K562 (cell line): ENCODE measurements at regions of chr5 and their contacts with region 1.

Region 1: GRCh38 chr5:180201051-180201987 is 7.7 kb downstream of the RASGEF1C start:
- DNase-seq: peak; percentile 63 to 70 (median 66)
- ATAC-seq: peak; percentile 87
- H3K4me3 ChIP-seq: no peak overlapping the region
- H3K27ac ChIP-seq: no peak overlapping the region
- H3K4me1 ChIP-seq: no peaks in the 10 kb centered on the region; a peak in 1 of 5 replicates
- H3K27me3 ChIP-seq: peaks cover 11 to 35% of the 10 kb centered on the region in 2 experiments; a peak in 4 of 5 replicates
- CTCF ChIP-seq: peak; percentile 77 to 85 (median 78)
- EP300 ChIP-seq: no peak
- POLR2A ChIP-seq: no peak
- RAD21 ChIP-seq: peak; percentile 32 to 81

Region 2: DNA sequence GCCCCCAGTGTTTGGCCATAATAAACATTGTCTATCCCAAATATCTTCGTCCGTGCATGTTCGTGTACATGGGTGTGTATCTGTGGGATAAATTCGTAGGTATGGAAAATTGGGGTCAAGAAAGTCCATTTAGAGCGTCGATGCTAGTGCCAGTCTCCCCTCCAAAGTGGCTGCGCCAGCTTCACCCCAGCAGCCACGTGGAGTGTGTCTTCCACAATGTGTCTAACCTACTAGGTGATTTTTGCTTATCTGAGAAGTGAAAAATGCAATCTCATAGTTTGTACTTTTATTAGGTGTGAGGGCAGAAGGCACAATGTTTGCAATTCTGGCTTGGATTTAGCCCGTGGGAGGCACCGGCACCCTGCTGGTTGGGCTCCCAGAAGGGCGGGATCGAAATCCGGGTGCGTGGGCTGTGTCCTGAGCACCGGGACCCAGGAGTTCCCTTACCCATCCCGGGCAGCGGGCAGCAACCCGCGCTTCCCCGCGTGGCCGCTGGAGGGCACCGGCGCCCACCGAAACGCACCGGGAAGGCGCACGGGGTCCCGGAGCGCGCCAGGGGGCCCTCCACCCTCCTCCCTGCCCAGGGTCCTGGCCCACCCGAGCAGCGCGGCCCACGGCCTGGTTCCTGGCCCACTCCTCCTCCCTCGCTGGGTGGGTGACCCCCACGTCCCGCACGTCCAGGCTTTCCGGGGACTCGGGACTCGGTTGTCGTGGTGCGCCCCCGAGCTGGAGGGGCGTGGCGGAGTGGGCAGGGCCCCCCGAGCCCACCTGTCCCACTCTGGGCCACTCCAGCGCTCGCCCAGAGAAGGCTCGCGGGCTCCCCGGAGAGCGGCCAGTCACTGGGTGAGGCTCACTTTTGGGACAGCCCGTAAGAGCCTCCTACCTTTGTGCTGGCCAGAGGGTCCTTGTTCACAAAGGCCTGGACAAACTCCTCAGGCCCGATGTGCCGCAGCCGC is 74.3 kb before region 1 on chr5:
- CTCF ChIA-PET with region 1: no interaction called
- POLR2A ChIA-PET with region 1: no interaction called
- in situ Hi-C with region 1: no loop called
- intact Hi-C with region 1: loop called (anchors 5 kb)
- DNase-seq: peak; percentile 45 to 82 (median 74)
- ATAC-seq: peak; percentile 84
- H3K4me3 ChIP-seq: peak overlapping the region; percentile 10; the same call in 1 of the 2 replicates
- H3K27ac ChIP-seq: no peak overlapping the region
- H3K4me1 ChIP-seq: peaks cover 0 to 24% of the 10 kb centered on the region in 2 experiments; a peak in 3 of 5 replicates
- H3K27me3 ChIP-seq: peaks cover 30 to 75% of the 10 kb centered on the region in 2 experiments; a peak in 4 of 5 replicates
- CTCF ChIP-seq: peak; percentile 71 to 85 (median 75)
- EP300 ChIP-seq: no peak
- POLR2A ChIP-seq: no peak
- RAD21 ChIP-seq: peak; percentile 58 to 65

Region 3: DNA sequence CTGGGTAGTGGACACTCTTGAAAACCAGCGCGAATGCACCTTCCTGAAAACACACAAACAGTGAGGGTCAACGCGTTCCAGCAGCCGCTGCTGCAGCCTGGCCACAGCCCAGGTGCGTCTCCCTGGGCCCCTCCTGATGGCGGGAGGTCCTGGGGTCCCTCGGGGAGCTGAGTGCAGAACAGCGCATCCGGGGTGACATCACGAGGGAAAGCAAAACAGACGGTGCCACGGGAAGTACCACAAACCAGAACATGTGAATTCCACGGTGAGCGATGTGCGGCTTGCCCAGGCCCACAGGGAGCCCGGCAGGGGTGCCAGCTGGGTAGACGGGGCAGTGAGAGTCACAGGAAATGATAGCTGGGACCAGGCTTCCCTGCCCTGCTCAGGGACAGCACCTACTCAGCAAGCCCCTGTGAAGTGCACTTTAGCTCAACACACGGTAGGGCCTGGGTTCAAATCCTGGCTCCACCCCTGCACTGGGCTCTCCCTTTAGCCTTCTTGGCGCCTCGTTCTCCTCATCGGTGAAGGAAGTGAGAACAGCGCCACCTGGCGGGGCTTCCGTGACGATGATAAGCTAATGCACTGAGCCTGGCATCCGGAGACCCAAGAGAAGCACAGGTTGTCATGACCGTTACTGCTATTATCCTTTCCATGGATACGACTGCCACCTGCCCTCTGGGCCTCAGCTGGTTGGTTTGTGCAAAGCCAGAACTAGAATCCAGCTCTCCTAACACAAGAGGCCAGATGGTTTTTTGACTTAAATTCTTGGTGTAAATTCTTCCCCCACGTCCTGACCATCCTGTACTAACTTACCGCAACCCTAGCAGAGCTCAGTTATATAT is 127.2 kb after region 1 on chr5:
- CTCF ChIA-PET with region 1: no interaction called
- POLR2A ChIA-PET with region 1: interaction called, 4 read pairs
- in situ Hi-C with region 1: no loop called
- intact Hi-C with region 1: loop called (anchors 1 kb)
- DNase-seq: peak; percentile 76 to 89 (median 81)
- ATAC-seq: peak; percentile 99
- H3K4me3 ChIP-seq: no peak overlapping the region
- H3K27ac ChIP-seq: no peak overlapping the region
- H3K4me1 ChIP-seq: peaks cover 5 to 12% of the 10 kb centered on the region in 2 experiments; a peak in 4 of 5 replicates
- H3K27me3 ChIP-seq: peaks cover 29 to 56% of the 10 kb centered on the region in 2 experiments
- CTCF ChIP-seq: peak; percentile 84 to 89 (median 89)
- EP300 ChIP-seq: no peak
- POLR2A ChIP-seq: no peak
- RAD21 ChIP-seq: peak; percentile 32 to 79; a peak in 2 of 4 replicates

Region 4: GRCh38 chr5:180470966-180471582 is 269.8 kb after region 1 on chr5:
- CTCF ChIA-PET with region 1: no interaction called
- POLR2A ChIA-PET with region 1: no interaction called
- in situ Hi-C with region 1: no loop called
- intact Hi-C with region 1: loop called (anchors 5 kb)
- DNase-seq: peak; percentile 72 to 79 (median 76)
- ATAC-seq: peak; percentile 89
- H3K4me3 ChIP-seq: no peak overlapping the region
- H3K27ac ChIP-seq: no peak overlapping the region
- H3K4me1 ChIP-seq: peaks cover 0 to 11% of the 10 kb centered on the region in 2 experiments; a peak in 2 of 5 replicates
- H3K27me3 ChIP-seq: peaks cover 6 to 66% of the 10 kb centered on the region in 2 experiments
- CTCF ChIP-seq: peak; percentile 81 to 89 (median 89)
- EP300 ChIP-seq: no peak
- POLR2A ChIP-seq: no peak
- RAD21 ChIP-seq: peak; percentile 53 to 80